Astrocyte of the cerebellum (primary cell): ENCODE measurements at regions of chr10 and their contacts with region 1.

Region 1: DNA sequence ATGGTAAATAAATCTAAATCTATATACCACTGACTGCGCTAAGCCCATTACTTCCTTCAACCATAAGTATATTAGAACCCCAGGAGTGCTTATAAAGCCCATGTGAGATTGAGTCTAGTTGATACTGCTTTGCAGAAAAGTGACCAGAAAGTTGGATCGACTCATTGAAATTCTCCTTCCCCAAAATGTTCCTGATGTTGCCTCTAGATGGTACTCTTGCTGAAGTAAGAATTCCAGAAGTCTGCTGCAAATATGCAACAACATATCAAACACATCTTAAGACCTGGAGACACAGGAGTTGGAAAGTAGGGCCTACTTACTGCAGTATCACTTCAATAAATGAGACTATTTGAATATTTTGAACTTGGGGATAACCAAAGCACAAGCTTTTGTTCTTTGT is 550.8 kb downstream of the IPMK start:
- DNase-seq: peak; percentile 28
- H3K4me3 ChIP-seq: no peak overlapping the region
- CTCF ChIP-seq: peak; percentile 62

Region 2: DNA sequence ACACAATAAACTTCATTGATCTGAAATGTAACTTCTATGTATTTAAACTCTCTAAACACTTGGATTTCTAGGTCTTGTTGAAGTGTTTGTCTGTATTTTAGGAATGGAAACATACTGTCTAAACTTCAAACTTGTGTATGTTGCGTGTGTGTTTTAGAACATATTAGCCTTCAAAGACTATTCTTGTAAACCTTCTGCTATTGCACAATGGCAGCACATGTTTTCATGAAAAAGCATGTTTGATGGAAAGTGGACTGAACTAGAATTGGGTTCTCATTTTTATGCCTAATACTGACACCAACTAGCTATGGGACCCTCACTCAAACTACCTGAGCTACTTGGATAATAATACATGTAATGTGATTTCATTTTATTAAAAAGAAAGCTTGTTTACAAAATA is 41.8 kb before region 1 on chr10:
- in situ Hi-C with region 1: loop called (anchors 5 kb)
- DNase-seq: no peak
- H3K4me3 ChIP-seq: no peak overlapping the region
- CTCF ChIP-seq: no peak